Tibial artery (tissue), 4 donors: ENCODE measurements at regions of chr12 and their contacts with region 1.

Region 1: DNA sequence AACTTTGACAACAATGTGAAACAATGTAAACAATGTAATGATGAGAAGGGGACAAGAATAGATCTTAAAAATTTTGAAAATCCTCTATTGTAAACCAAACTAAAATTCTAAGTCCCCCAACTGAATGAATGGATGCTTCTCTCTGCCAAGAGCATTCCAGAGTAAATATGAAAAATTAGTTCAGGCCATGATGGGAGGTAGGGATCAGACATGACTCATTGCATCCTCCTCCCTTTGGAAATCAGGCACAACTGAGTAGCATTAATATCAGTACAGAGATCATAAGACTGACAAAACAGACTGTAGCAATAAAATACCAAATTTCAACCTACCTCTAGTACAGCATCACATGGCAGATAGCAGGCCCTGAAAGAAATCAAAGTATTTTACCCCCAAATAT is 559.9 kb downstream of the C12orf50 start:
- DNase-seq: no peak
- H3K4me3 ChIP-seq: no peak overlapping the region
- H3K27ac ChIP-seq: no peak overlapping the region
- H3K4me1 ChIP-seq: no peaks in the 10 kb centered on the region
- H3K27me3 ChIP-seq: no peaks in the 10 kb centered on the region
- CTCF ChIP-seq: no peak

Region 2: GRCh38 chr12:87596636-87597035 is 127.3 kb after region 1 on chr12:
- intact Hi-C with region 1: loop called (anchors 5 kb)
- DNase-seq: no peak
- H3K4me3 ChIP-seq: no peak overlapping the region
- H3K27ac ChIP-seq: no peak overlapping the region
- H3K4me1 ChIP-seq: no peaks in the 10 kb centered on the region
- H3K27me3 ChIP-seq: no peaks in the 10 kb centered on the region
- CTCF ChIP-seq: no peak

Region 3: DNA sequence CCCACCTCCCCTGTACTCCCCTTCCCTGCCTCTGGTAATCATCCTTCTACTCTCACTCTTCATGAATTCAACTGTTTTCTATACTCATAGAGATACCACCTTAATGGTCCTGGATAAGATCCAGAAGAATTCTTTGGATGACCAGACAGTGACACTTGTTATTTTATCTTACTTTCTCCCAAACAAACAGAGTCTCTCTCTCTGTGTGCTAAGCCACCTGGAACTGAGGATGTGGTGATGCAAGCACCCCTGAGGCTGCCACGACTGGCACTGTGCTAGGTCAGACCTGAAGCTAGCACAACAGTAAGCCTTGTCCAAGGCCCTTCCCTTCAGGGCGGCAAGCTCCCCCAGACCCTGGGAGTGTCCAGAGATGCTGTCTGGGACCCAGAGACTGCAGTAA is 309.7 kb after region 1 on chr12:
- intact Hi-C with region 1: no loop called
- DNase-seq: no peak
- H3K4me3 ChIP-seq: no peak overlapping the region
- H3K27ac ChIP-seq: no peak overlapping the region
- H3K4me1 ChIP-seq: peaks cover 0 to 7% (median 1%) of the 10 kb centered on the region in 4 donors
- H3K27me3 ChIP-seq: no peaks in the 10 kb centered on the region
- CTCF ChIP-seq: no peak